CD4-positive, alpha-beta memory T cell (primary cell): ENCODE measurements at regions of chr6 and their contacts with region 1.

Region 1: GRCh38 chr6:158869826-158870648 is 50.9 kb upstream of the EZR start:
- DNase-seq: peak in 3 of 5 donors; percentile 93 to 98 (median 96)
- H3K4me3 ChIP-seq: peak overlapping the region; percentile 55 to 61
- H3K4me3 Mint-ChIP-seq: peak overlapping the region; percentile 89 to 96 (median 92)
- H3K27ac ChIP-seq: peak overlapping the region; percentile 97
- H3K27ac Mint-ChIP-seq: peak overlapping the region; percentile 98 to 100 (median 100)
- H3K4me1 ChIP-seq: peaks cover 20% of the 10 kb centered on the region
- H3K4me1 Mint-ChIP-seq: peaks cover 12 to 39% (median 22%) of the 10 kb centered on the region in 4 donors
- H3K27me3 ChIP-seq: no peaks in the 10 kb centered on the region
- H3K27me3 Mint-ChIP-seq: no peaks in the 10 kb centered on the region

Region 2: GRCh38 chr6:157379656-157380454 is 1490.2 kb before region 1 on chr6:
- CTCF ChIA-PET with region 1: no interaction called
- POLR2A ChIA-PET with region 1: no interaction called
- intact Hi-C with region 1: loop called (anchors 5 kb)
- DNase-seq: peak; percentile 83 to 92 (median 85)
- H3K4me3 ChIP-seq: peak overlapping the region; percentile 76 to 83
- H3K4me3 Mint-ChIP-seq: peak overlapping the region; percentile 77 to 91 (median 86)
- H3K27ac ChIP-seq: peak overlapping the region; percentile 66
- H3K27ac Mint-ChIP-seq: peak overlapping the region; percentile 37 to 80 (median 66)
- H3K4me1 ChIP-seq: peaks cover 15% of the 10 kb centered on the region
- H3K4me1 Mint-ChIP-seq: peaks cover 11 to 17% (median 14%) of the 10 kb centered on the region in 4 donors
- H3K27me3 ChIP-seq: no peaks in the 10 kb centered on the region
- H3K27me3 Mint-ChIP-seq: peaks cover 0 to 3% of the 10 kb centered on the region in 2 donors

Region 3: GRCh38 chr6:158793432-158793831 is 76.6 kb before region 1 on chr6:
- CTCF ChIA-PET with region 1: interaction called, 20 read pairs
- POLR2A ChIA-PET with region 1: interaction called, 47 read pairs
- intact Hi-C with region 1: no loop called
- DNase-seq: peak in 3 of 5 donors; percentile 44 to 53 (median 46)
- H3K4me3 ChIP-seq: no peak overlapping the region
- H3K4me3 Mint-ChIP-seq: peak overlapping the region in 4 of 8 donors; percentile 19 to 67 (median 36)
- H3K27ac ChIP-seq: no peak overlapping the region
- H3K27ac Mint-ChIP-seq: peak overlapping the region; percentile 3 to 90 (median 77)
- H3K4me1 ChIP-seq: peaks cover 97% of the 10 kb centered on the region
- H3K4me1 Mint-ChIP-seq: peaks cover 66 to 91% (median 81%) of the 10 kb centered on the region in 4 donors
- H3K27me3 ChIP-seq: no peaks in the 10 kb centered on the region
- H3K27me3 Mint-ChIP-seq: no peaks in the 10 kb centered on the region

Region 4: GRCh38 chr6:158819213-158819909 is 50.7 kb before region 1 on chr6 and contains the start of gene EZR:
- CTCF ChIA-PET with region 1: interaction called, 4 read pairs
- POLR2A ChIA-PET with region 1: interaction called, 130 read pairs
- intact Hi-C with region 1: loop called (anchors 1 kb)
- DNase-seq: peak; percentile 82 to 86 (median 84)
- H3K4me3 ChIP-seq: peak within 1 kb of the TSS in 1 of 2 donors; percentile 77
- H3K4me3 Mint-ChIP-seq: peak within 1 kb of the TSS; percentile 79 to 98 (median 84)
- H3K27ac ChIP-seq: peak within 1 kb of the TSS; percentile 86
- H3K27ac Mint-ChIP-seq: peak within 1 kb of the TSS; percentile 84 to 100 (median 96)
- H3K4me1 ChIP-seq: peaks cover 31% of the 10 kb centered on the region
- H3K4me1 Mint-ChIP-seq: peaks cover 23 to 58% (median 27%) of the 10 kb centered on the region in 4 donors
- H3K27me3 ChIP-seq: no peaks in the 10 kb centered on the region
- H3K27me3 Mint-ChIP-seq: no peaks in the 10 kb centered on the region
- total RNA-seq, gene EZR: 264 to 277 TPM

Region 5: DNA sequence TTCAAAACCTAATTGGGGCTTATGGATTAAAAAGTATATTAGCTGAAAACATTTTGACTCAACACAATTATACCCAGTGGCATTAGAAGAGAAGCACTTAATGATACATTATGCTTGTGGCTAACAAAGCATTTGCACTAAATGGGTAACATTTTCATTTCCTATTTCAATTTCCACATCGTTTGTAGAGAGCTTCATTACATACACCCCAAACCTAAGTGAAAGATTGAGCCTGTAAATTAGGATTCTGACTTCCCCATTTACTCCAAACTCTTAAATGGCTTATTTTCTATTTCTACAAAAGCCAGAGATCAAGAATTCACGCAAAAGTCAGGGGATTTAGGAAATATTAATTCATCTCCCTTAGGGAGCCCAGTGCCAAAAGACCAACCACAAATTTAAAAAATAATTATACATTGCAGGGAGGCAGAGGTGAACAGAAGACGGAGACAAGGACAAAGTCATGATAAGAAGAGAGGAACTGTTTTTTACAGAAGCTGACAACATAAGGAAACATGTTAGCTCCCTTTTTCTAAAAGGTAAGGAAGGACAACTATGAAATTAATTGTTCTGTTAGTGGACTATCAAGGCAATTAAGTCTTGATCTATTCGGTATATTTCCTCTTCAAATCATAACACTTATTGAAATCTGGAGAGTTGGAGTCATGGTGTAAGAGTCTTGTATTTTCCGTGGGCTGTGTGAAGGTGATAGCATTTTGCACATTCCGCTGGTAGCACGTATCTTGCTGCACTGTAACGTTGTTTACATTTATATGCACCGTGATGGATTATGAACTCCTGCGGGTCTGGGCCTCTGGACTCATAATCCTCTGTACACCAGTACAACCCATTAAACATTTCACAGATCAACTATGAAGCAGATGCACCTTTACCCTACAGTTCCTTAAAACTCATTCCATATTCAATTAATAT is 26.0 kb before region 1 on chr6:
- CTCF ChIA-PET with region 1: no interaction called
- POLR2A ChIA-PET with region 1: interaction called, 12 read pairs
- intact Hi-C with region 1: no loop called
- DNase-seq: no peak
- H3K4me3 ChIP-seq: no peak overlapping the region
- H3K4me3 Mint-ChIP-seq: no peak overlapping the region
- H3K27ac ChIP-seq: no peak overlapping the region
- H3K27ac Mint-ChIP-seq: peak overlapping the region in 2 of 7 donors; percentile 29 to 46
- H3K4me1 ChIP-seq: no peaks in the 10 kb centered on the region
- H3K4me1 Mint-ChIP-seq: peaks cover 0 to 15% (median 4%) of the 10 kb centered on the region in 4 donors
- H3K27me3 ChIP-seq: no peaks in the 10 kb centered on the region
- H3K27me3 Mint-ChIP-seq: no peaks in the 10 kb centered on the region

Region 6: GRCh38 chr6:158920311-158920915 is 50.4 kb after region 1 on chr6:
- CTCF ChIA-PET with region 1: no interaction called
- POLR2A ChIA-PET with region 1: interaction called, 25 read pairs
- intact Hi-C with region 1: loop called (anchors 2 kb)
- DNase-seq: no peak
- H3K4me3 ChIP-seq: no peak overlapping the region
- H3K4me3 Mint-ChIP-seq: no peak overlapping the region
- H3K27ac ChIP-seq: no peak overlapping the region
- H3K27ac Mint-ChIP-seq: peak overlapping the region in 4 of 7 donors; percentile 23 to 50 (median 34)
- H3K4me1 ChIP-seq: peaks cover 20% of the 10 kb centered on the region
- H3K4me1 Mint-ChIP-seq: peaks cover 7 to 25% (median 17%) of the 10 kb centered on the region in 4 donors
- H3K27me3 ChIP-seq: no peaks in the 10 kb centered on the region
- H3K27me3 Mint-ChIP-seq: no peaks in the 10 kb centered on the region

Region 7: DNA sequence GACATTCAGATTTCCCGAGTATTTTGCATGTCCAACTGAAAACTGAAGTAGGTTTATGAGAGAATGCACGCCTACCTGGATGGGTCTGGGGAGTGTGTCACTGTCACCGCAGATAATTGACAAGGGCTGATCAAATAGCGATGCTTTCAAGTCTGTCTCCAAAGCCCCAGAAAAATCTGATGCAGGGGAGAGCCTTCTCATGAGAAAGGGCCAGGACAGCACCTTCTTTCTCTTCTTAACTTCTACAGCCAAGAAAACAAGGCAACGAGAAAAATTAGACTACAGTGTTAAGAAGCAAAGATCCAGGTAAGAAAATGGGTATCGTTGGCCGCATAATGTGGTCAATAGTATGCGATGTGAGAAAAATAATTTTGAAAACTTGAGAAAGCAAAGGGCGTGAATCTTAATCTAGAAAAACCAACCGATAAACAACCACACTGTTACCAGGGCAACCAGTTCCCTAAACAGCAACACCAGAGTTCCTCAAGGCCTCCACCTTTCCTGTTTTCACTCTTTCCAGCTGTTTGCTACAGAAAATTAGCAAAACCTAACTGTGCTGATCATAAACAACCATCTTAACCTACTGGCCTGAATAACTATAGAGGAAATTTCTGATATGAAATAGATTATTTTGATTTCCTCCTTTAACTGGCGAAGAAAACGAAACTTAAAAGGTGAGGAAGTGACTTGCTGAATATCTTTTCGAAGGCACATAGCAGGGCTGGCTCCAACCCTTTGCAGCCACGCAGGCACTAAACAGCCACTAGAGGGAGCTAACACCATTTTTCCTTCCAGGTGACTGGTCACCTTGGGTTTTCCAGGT is 172.2 kb after region 1 on chr6:
- CTCF ChIA-PET with region 1: no interaction called
- POLR2A ChIA-PET with region 1: interaction called, 13 read pairs
- intact Hi-C with region 1: no loop called
- DNase-seq: peak; percentile 90 to 96 (median 93)
- H3K4me3 ChIP-seq: peak overlapping the region; percentile 77 to 79
- H3K4me3 Mint-ChIP-seq: peak overlapping the region; percentile 99 to 100 (median 100)
- H3K27ac ChIP-seq: peak overlapping the region; percentile 82
- H3K27ac Mint-ChIP-seq: peak overlapping the region; percentile 98 to 100 (median 99)
- H3K4me1 ChIP-seq: peaks cover 66% of the 10 kb centered on the region
- H3K4me1 Mint-ChIP-seq: peaks cover 45 to 88% (median 59%) of the 10 kb centered on the region in 4 donors
- H3K27me3 ChIP-seq: no peaks in the 10 kb centered on the region
- H3K27me3 Mint-ChIP-seq: peaks cover 0 to 2% of the 10 kb centered on the region in 2 donors